ENCODE measurements at regions of chr19 and their contacts with region 1.

Region 1: DNA sequence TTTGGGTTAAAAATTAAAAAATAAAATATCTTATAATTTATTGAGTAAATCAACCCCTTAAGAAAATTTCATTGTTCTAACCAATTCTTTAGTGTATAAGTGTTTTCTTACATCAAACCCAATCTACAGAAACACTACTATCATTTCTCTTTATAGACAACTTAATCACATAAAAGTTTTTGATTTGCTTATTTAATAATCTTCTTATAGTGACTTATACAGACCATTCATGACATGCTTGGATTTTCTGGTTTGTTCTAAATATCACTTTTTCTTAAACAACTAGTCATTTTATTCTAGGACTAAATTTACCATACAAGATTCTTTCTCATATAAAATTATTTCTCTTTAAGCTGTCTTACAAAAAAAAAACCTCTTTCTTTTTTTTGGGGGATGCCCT is 27.3 kb upstream of the ZSCAN5A start:
- DNase-seq: no peak
- ATAC-seq: no peak
- H3K4me3 Mint-ChIP-seq: no peak overlapping the region
- H3K27ac Mint-ChIP-seq: no peak overlapping the region
- H3K4me1 Mint-ChIP-seq: no peaks in the 10 kb centered on the region
- H3K27me3 Mint-ChIP-seq: peaks cover 11% of the 10 kb centered on the region
- CTCF ChIP-seq: no peak

Region 2: DNA sequence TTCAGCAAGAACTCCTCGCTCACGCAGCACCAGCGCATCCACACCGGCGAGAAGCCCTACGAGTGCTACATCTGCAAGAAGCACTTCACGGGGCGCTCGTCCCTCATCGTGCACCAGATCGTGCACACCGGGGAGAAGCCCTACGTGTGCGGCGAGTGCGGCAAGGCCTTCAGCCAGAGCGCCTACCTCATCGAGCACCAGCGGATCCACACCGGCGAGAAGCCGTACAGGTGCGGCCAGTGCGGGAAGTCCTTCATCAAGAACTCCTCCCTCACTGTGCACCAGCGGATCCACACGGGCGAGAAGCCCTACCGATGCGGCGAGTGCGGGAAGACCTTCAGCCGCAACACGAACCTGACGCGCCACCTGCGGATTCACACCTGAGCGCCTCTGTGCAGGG is 280.4 kb after region 1 on chr19:
- CTCF ChIA-PET with region 1: no interaction called
- POLR2A ChIA-PET with region 1: interaction called, 10 read pairs
- intact Hi-C with region 1: no loop called
- DNase-seq: no peak
- ATAC-seq: no peak
- H3K4me3 Mint-ChIP-seq: no peak overlapping the region
- H3K27ac Mint-ChIP-seq: no peak overlapping the region
- H3K4me1 Mint-ChIP-seq: no peaks in the 10 kb centered on the region
- H3K27me3 Mint-ChIP-seq: no peaks in the 10 kb centered on the region
- CTCF ChIP-seq: no peak

Measured in activated B cell treated with CpG ODN at 0.5 μM for 24 hours (primary cell).